ENCODE measurements at regions of chr4 and their contacts with region 1.

Region 1: GRCh38 chr4:54064295-54065111 is at the start of gene CHIC2:
- DNase-seq: peak; percentile 94
- ATAC-seq: peak; percentile 72
- H3K4me3 ChIP-seq: peak within 1 kb of the TSS; percentile 82
- H3K27ac ChIP-seq: peak within 1 kb of the TSS; percentile 43
- H3K4me1 ChIP-seq: peaks cover 64% of the 10 kb centered on the region
- H3K27me3 ChIP-seq: no peaks in the 10 kb centered on the region
- CTCF ChIP-seq: no peak
- total RNA-seq, gene CHIC2: 52.3 and 58.1 TPM in 2 replicates

Region 2: GRCh38 chr4:53365486-53366300 is 698.8 kb before region 1 on chr4 and contains the start of gene SCFD2:
- CTCF ChIA-PET with region 1: no interaction called
- POLR2A ChIA-PET with region 1: no interaction called
- intact Hi-C with region 1: loop called (anchors 10 kb)
- DNase-seq: peak; percentile 100
- ATAC-seq: peak; percentile 92
- H3K4me3 ChIP-seq: peak within 1 kb of the TSS; percentile 95
- H3K27ac ChIP-seq: peak within 1 kb of the TSS; percentile 51
- H3K4me1 ChIP-seq: peaks cover 34% of the 10 kb centered on the region
- H3K27me3 ChIP-seq: no peaks in the 10 kb centered on the region
- CTCF ChIP-seq: no peak
- total RNA-seq, gene SCFD2: 36.6 and 40.7 TPM in 2 replicates

Region 3: DNA sequence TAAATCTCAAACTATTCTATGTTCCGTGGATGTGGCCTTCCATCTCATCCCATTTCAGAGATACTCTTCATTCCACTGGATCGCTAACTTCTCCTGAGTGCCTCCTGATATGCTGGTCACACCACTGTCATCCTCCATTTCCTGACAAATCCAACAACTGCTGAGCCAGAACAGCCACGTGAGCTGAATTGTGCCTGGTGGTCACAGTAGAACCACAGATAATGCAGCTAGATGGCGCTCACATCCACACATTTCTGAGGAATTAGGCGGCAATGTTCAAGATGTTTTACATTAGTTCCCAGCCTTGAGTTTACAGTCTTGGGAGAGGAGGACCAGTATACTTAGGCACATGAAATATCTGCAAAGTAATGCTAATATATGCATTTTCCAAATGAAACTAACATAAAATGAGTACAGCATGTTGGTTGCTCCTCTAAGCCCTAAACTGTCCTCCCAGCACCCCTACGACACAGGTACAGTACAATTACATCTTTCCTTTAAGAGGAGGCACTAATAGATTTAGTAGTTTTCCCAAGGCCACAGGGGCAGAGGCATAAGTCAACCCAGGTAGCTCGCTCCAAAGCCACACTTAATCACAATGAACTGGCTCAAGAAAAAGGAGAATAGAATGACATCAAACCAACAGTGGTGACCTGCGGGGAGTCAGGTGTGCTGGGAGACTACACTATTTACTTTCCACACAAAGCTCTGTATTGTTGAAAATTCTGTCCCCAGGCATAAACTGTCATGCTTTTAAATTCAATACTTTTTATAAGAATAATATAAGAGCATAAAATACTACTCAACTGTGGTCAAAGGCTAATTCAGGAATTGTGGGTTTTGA is 134.3 kb before region 1 on chr4:
- CTCF ChIA-PET with region 1: no interaction called
- POLR2A ChIA-PET with region 1: no interaction called
- intact Hi-C with region 1: loop called (anchors 1 kb)
- DNase-seq: peak; percentile 94
- ATAC-seq: peak; percentile 86
- H3K4me3 ChIP-seq: no peak overlapping the region
- H3K27ac ChIP-seq: peak overlapping the region; percentile 90
- H3K4me1 ChIP-seq: peaks cover 36% of the 10 kb centered on the region
- H3K27me3 ChIP-seq: no peaks in the 10 kb centered on the region
- CTCF ChIP-seq: peak; percentile 97

Region 4: GRCh38 chr4:54005475-54005874 is 59.0 kb before region 1 on chr4:
- CTCF ChIA-PET with region 1: no interaction called
- POLR2A ChIA-PET with region 1: no interaction called
- intact Hi-C with region 1: loop called (anchors 5 kb)
- DNase-seq: no peak
- ATAC-seq: no peak
- H3K4me3 ChIP-seq: no peak overlapping the region
- H3K27ac ChIP-seq: no peak overlapping the region
- H3K4me1 ChIP-seq: peaks cover 7% of the 10 kb centered on the region; the same call in 1 of the 2 replicates
- H3K27me3 ChIP-seq: no peaks in the 10 kb centered on the region
- CTCF ChIP-seq: no peak

Region 5: DNA sequence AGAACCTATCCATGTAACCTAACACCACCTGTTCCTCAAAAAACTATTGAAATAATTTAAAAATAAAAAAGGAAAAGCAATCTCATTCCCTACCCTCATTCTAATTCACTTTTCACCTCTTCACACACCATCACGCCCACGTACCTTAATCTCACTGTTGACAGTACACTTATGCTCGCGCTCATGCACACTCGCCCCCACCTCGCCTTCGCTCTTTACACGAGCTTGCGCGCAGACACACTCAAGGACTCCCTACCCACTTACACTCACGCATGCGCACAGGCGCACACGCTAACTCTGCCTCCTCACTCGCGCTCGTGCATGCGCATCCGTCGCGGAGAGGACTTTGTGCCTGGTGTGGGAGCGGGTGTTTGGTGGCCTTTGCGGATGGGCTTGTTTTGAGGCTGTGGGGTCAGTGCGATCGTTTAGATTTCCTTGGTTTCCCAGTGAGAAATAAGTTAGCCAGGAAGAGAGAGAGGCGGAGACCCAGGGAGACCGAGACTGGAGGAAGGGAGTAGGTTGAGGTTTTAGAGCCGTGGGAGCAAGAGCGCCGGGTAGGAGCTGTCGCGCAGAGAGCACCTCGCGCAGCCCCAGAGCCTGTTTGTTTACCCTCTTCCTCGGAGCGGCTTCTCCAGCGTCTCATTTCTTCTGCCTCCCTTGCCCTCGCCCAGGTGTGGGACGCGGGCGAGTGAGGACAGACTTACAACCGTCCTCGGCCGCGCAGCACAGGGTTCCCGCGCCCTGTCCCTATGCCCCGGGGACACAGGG is 27.3 kb after region 1 on chr4:
- CTCF ChIA-PET with region 1: no interaction called
- POLR2A ChIA-PET with region 1: no interaction called
- intact Hi-C with region 1: loop called (anchors 1 kb)
- DNase-seq: peak; percentile 73
- ATAC-seq: peak; percentile 85
- H3K4me3 ChIP-seq: peak overlapping the region; percentile 76
- H3K27ac ChIP-seq: no peak overlapping the region
- H3K4me1 ChIP-seq: peaks cover 10% of the 10 kb centered on the region; the same call in 1 of the 2 replicates
- H3K27me3 ChIP-seq: 0 out of 2 replicates have a peak, but pooled peaks cover 1% of the 10 kb centered on the region
- CTCF ChIP-seq: no peak

Region 6: GRCh38 chr4:54197926-54198325 is 133.4 kb after region 1 on chr4:
- CTCF ChIA-PET with region 1: no interaction called
- POLR2A ChIA-PET with region 1: no interaction called
- intact Hi-C with region 1: no loop called
- DNase-seq: no peak
- ATAC-seq: no peak
- H3K4me3 ChIP-seq: no peak overlapping the region
- H3K27ac ChIP-seq: no peak overlapping the region
- H3K4me1 ChIP-seq: no peaks in the 10 kb centered on the region
- H3K27me3 ChIP-seq: no peaks in the 10 kb centered on the region
- CTCF ChIP-seq: no peak

Region 7: DNA sequence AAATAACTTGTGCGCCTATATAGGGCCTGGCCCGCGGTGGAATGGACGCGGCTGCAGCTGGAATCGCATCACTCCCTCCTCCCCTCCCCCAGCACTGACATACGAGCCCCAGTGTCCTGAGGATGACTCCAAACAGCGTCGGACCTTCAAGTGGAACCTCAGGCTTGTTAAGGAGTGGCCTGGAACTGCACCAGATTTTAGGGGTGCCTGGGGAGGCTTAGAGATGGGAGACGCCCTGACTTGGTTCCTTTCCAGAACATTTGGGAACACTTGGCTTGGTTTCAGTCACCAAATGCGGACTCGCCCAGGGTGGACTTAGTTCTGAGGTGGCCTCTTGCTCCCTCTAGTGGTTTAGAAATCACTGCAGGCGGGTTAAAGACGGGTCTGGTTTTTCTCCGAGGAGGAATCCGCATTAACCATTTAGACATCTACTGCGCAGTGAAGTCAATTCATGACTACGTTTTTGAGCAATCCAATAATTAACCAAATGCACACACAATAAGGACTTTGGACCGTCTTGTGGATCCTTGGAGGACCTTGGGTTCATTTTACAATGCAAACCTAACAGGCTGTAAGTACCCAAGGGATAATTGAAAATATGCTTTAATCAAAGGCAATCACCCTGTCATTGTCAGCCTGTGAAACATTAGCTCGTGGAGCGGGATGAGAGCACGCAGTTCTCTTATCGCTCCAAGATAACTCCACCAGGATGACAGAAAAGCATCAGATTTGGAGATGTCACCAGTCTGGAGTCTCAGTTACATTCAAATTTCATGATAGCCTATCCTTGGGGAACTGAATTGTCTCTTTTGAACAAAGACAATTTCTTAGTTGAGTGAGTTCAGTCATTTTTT is 153.4 kb after region 1 on chr4:
- CTCF ChIA-PET with region 1: no interaction called
- POLR2A ChIA-PET with region 1: no interaction called
- intact Hi-C with region 1: loop called (anchors 5 kb)
- DNase-seq: peak; percentile 94
- ATAC-seq: peak; percentile 90
- H3K4me3 ChIP-seq: peak overlapping the region; percentile 70
- H3K27ac ChIP-seq: no peak overlapping the region
- H3K4me1 ChIP-seq: 0 out of 2 replicates have a peak, but pooled peaks cover 4% of the 10 kb centered on the region
- H3K27me3 ChIP-seq: no peaks in the 10 kb centered on the region
- CTCF ChIP-seq: peak; percentile 98